Activated CD8-positive, alpha-beta T cell treated with anti-CD3 and anti-CD28 coated beads, Interleukin-2, amount 10 ng/mL, durations not matched to agents 7 days and 5 days (primary cell): ENCODE measurements at regions of chr22 and their contacts with region 1.

Region 1: DNA sequence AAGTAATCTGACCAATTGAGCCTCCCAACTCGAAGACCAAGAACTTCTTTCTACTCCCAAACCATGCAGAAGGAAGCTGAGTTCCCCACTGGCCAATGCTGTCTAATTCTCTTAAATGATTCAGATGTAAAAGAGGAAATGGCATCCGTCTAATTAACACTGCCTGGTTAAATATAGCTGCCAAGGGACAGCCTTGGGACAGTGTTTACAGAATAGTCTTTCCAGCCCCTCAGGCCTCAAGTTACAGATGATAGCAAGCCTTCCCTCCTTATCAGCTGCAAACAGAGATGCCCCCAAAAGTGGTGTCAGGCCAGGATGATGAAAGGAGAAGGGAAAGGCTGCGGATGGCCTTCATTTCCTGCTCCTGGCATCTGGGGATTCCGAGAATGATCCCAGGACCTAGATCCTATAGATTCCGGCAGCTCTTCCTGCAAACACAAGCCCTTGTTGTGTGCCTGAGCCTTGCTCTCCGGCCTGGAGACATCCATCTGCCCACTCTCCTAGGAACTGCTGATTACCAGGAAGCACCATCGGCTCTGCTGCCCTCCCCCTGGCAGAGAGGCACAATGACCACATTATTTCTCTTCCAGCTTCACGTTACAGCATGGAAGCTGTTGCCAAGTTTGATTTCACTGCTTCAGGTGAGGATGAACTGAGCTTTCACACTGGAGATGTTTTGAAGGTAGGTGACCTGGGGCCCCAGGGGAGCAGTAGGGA is 13.5 kb upstream of the TMA7B start:
- DNase-seq: no peak
- ATAC-seq: no peak
- H3K4me3 Mint-ChIP-seq: no peak overlapping the region
- H3K27ac Mint-ChIP-seq: peak overlapping the region; percentile 58
- H3K4me1 Mint-ChIP-seq: peaks cover 98% of the 10 kb centered on the region
- H3K27me3 Mint-ChIP-seq: no peaks in the 10 kb centered on the region

Region 2: GRCh38 chr22:39839917-39840510 is 106.6 kb before region 1 on chr22:
- CTCF ChIA-PET with region 1: no interaction called
- POLR2A ChIA-PET with region 1: no interaction called
- DNase-seq: peak; percentile 47
- ATAC-seq: peak; percentile 89
- H3K4me3 Mint-ChIP-seq: no peak overlapping the region
- H3K27ac Mint-ChIP-seq: no peak overlapping the region
- H3K4me1 Mint-ChIP-seq: peaks cover 15% of the 10 kb centered on the region
- H3K27me3 Mint-ChIP-seq: peaks cover 12% of the 10 kb centered on the region

Region 3: DNA sequence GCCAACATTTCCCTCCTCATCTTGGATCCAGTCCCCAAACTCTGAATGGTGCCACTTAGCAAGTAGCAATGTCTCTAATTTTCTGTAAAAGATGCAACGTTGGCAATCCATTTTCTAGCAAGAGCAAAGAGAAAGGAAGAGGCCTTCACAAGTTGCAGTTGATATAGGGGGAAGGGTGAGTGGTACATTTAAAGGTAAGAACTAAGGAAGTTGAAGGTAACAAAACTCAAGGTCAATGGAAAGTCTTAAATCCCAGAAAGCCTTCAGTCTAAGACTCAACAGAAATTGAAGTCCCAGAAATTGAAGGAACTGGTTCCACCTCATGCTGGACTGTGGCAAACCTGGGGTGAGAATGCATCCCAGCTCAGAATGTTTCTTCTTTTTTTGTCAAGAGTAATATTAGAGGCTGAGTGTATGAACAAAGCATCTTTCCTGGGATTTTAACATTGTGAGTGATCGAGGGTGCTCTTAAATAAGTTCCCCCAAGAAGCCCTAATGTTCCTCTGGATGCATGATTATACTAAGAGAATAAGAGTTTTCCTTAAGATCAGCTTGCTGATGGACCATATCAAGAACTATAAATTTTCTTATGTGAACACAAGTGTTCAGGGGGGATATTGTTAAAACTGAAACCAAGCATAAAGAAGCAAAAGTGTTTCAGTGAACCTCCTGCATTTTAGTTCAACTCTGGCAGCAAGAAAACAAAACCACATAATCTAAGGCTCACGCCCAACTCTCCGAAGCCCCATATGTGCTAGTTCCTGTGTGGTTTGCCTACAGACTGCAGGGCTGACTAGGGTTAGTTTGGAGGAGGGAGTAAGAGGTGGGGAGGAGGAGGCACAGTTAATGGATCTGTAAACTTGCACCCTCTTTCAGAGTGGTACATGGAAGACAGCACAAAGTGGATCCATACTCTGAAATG is 46.1 kb before region 1 on chr22 and contains the start of gene GRAP2:
- CTCF ChIA-PET with region 1: interaction called, 11 read pairs
- POLR2A ChIA-PET with region 1: interaction called, 3 read pairs
- DNase-seq: peak; percentile 90
- ATAC-seq: peak; percentile 95
- H3K4me3 Mint-ChIP-seq: peak within 1 kb of the TSS; percentile 95
- H3K27ac Mint-ChIP-seq: peak within 1 kb of the TSS; percentile 96
- H3K4me1 Mint-ChIP-seq: peaks cover 17% of the 10 kb centered on the region
- H3K27me3 Mint-ChIP-seq: no peaks in the 10 kb centered on the region
- total RNA-seq, gene GRAP2: 235 to 239 TPM

Region 4: DNA sequence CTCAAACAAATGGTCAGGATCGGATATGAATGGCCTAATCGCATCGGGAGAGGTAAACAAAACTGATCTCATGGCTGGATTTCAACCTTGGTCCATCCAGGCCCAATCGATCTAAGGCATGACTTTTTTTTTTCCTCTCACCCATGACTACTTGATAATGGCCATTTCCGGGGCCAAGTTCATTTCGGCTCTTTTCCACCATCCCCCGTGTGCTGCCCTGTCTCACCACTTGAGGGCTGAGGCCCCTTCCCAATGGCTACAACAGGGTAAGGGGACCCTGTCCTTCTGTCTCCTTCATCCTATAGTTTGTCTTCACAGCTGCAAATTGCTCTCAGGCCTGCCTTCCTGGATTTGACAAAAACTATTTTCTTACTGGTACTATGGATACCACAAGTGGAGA is 19.1 kb before region 1 on chr22:
- CTCF ChIA-PET with region 1: interaction called, 79 read pairs
- POLR2A ChIA-PET with region 1: interaction called, 11 read pairs
- DNase-seq: peak; percentile 65
- ATAC-seq: peak; percentile 31
- H3K4me3 Mint-ChIP-seq: no peak overlapping the region
- H3K27ac Mint-ChIP-seq: no peak overlapping the region
- H3K4me1 Mint-ChIP-seq: peaks cover 34% of the 10 kb centered on the region
- H3K27me3 Mint-ChIP-seq: no peaks in the 10 kb centered on the region

Region 5: DNA sequence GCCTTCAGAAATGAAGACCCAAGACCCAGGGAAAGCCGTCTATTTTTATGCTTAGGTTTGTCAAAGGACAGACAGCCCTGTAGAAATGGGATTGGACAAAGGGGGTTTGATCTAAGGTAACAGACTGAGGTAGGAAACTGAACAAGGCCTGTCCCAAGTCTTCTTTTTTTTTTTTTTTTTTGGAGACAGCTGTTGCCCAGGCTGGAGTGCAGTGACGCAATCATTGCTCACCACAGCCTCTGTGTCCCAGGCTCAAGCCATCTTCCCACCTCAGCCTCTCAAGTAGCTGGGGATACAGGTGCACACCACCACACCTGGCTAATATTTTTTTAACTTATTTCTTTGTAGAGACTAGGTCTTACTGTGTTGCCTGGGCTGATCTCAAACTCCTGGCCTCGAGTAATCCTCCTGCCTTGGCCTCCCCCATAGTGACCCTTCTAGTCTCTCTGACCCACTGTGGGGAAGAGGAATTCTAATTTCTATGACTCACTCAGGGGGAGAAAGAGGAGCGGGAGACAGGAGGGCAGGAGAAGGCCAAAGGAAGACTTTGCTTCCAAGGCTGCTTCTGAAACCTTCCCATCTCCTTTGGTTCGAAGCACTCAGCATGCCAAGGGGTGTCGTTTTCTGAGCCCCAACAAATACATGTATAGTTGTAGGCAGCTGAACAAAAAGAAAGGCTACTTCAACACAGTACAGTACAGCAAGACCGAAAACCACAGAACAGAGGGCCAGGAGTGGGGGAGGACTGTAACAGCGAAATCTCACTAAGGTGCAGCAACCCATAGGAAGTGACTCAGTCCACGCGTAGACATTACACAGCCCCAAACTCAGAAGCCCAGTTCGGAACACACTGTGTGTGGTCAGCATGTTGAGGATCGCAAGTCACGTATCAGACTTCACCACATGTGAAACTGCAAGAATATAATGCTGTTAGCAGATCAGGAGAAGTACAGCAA is 14.4 kb after region 1 on chr22:
- CTCF ChIA-PET with region 1: interaction called, 10 read pairs
- POLR2A ChIA-PET with region 1: interaction called, 4 read pairs
- DNase-seq: peak; percentile 91
- ATAC-seq: peak; percentile 94
- H3K4me3 Mint-ChIP-seq: peak overlapping the region; percentile 60
- H3K27ac Mint-ChIP-seq: peak overlapping the region; percentile 86
- H3K4me1 Mint-ChIP-seq: peaks cover 75% of the 10 kb centered on the region
- H3K27me3 Mint-ChIP-seq: no peaks in the 10 kb centered on the region

Region 6: GRCh38 chr22:40055143-40055883 is 108.7 kb after region 1 on chr22:
- CTCF ChIA-PET with region 1: no interaction called
- POLR2A ChIA-PET with region 1: no interaction called
- DNase-seq: peak; percentile 46
- ATAC-seq: peak; percentile 94
- H3K4me3 Mint-ChIP-seq: peak overlapping the region; percentile 55
- H3K27ac Mint-ChIP-seq: peak overlapping the region; percentile 92
- H3K4me1 Mint-ChIP-seq: peaks cover 78% of the 10 kb centered on the region
- H3K27me3 Mint-ChIP-seq: no peaks in the 10 kb centered on the region

Region 7: DNA sequence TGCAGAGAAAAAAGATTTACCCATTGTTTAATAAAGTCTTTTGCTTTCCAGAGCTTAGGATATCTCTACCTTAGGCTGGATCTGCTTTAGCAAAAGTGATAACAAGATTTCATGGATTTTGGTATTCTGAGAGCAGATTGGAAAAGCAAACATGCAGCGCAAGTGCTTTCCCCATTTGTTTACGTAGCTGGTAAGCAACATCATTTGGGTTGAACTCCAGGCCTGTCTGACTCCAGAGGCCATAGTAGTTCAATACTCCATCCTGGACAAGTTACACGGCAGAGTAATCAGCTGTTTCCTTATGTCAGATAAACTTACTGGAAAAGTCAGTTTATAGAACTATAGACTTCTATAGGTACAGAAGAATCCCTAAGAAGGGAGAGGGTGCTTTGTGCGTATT is 190.5 kb after region 1 on chr22:
- CTCF ChIA-PET with region 1: no interaction called
- POLR2A ChIA-PET with region 1: no interaction called
- DNase-seq: no peak
- ATAC-seq: no peak
- H3K4me3 Mint-ChIP-seq: no peak overlapping the region
- H3K27ac Mint-ChIP-seq: no peak overlapping the region
- H3K4me1 Mint-ChIP-seq: peaks cover 10% of the 10 kb centered on the region
- H3K27me3 Mint-ChIP-seq: no peaks in the 10 kb centered on the region